ENCODE measurements at regions of chr5 and their contacts with region 1.

Region 1: DNA sequence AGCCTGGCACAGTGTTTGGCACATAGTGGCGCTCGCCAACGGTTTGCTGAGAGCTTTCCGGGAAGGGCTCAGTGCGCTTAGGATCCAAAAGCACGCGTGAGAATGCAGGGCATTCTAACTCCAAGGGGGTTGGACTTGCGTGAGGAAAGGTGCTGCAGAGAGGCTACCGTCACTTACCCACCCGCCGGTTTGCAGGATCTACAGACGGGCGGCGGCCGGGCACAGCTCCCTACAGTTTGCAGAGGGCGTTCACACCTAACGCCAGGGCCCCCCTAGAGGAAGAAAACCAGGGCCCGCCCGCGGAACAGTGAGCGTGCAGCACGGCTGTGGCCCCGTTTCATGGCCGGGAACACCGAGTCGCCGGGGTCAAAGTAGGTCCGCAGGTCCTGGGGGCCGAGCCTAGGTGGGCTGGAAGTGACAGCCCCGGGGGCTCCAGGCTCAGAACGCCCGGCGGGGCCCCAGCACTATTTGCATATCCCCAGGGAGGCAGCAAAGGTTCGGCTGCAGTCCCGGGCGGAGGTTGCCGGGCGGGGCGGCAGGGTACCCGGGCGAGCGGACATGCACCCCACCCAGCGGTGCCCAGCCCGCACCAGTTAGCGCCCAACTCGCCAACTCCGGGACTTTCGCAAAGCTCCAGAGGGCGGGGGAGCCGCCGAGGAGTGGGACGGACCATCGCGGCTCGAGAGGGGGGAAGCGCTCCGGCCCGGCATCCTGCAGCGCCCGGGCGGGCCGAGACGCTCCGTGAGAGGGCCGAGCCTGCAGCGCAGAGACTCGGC is 526 bp upstream of the GALNT10 start:
- DNase-seq: peak; percentile 83
- H3K4me3 Mint-ChIP-seq: peak overlapping the region; percentile 80
- H3K27ac Mint-ChIP-seq: peak overlapping the region; percentile 55
- H3K4me1 Mint-ChIP-seq: peaks cover 39% of the 10 kb centered on the region
- H3K27me3 Mint-ChIP-seq: peaks cover 5% of the 10 kb centered on the region

Region 2: GRCh38 chr5:153907170-153907775 is 282.7 kb before region 1 on chr5:
- CTCF ChIA-PET with region 1: no interaction called
- POLR2A ChIA-PET with region 1: no interaction called
- intact Hi-C with region 1: no loop called
- DNase-seq: no peak
- H3K4me3 Mint-ChIP-seq: no peak overlapping the region
- H3K27ac Mint-ChIP-seq: no peak overlapping the region
- H3K4me1 Mint-ChIP-seq: no peaks in the 10 kb centered on the region
- H3K27me3 Mint-ChIP-seq: no peaks in the 10 kb centered on the region

Region 3: DNA sequence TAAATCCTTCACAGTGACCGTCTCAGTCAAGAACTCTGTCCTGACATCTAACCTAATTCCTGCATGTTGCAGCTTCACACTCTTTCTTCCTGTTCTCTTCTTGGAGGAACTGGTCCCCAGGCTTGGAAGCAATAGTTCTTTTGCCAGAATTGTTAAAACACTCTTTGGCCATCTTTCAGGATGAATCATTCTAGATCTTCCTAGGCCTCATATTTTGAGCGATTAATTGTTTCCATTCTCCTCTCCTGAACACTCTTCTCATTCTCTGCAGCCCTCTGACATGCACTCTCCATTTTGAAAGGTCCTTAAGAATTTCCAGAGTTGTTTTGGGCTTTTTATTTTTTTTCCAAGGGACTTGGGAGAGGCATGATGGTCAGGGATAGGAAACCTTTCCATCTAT is 237.1 kb before region 1 on chr5:
- CTCF ChIA-PET with region 1: no interaction called
- POLR2A ChIA-PET with region 1: no interaction called
- intact Hi-C with region 1: no loop called
- DNase-seq: no peak
- H3K4me3 Mint-ChIP-seq: no peak overlapping the region
- H3K27ac Mint-ChIP-seq: no peak overlapping the region
- H3K4me1 Mint-ChIP-seq: no peaks in the 10 kb centered on the region
- H3K27me3 Mint-ChIP-seq: no peaks in the 10 kb centered on the region

Region 4: DNA sequence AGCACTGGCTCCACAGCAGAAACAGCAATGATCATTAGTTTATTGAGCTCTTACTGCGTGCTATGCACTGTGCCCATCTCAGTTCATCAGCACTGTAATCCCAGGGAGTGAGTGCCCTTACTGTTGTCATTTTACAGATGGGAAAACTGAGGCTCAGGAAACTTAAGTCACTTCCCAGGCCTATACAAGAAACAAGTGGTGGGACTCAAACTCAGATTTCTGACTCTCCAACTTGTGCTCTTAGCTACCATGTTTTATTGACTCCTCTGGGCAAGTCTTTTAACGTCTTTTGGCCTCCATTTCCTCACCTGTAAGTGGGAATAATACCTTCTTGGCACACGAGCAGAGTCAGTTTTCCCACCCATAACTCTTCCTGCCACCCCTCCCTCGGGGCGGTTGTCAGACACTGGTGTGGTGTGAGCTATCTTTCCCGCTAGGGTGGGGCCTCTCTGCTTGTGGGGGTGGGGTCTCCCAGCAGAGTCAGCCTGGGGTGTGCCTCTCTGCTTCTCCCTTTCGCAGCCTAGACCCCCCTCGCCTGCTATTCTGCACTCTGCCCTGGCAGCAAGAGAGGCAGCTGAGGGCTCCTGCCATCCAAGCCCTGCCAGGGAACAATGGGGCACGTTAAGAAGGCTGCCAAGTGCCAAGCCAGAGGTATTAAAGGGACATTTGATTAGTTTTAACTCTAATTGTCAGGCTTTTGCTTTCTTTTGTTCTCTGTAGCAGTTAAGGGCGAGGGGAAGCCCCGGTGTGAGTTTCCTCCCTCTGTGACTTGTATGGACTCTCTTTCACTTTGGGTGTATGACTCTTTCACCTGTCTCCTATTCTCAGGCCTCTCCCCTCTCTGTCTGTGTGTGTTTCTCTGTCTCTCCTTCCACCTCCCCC is 12.6 kb after region 1 on chr5:
- CTCF ChIA-PET with region 1: interaction called, 8 read pairs
- POLR2A ChIA-PET with region 1: interaction called, 27 read pairs
- intact Hi-C with region 1: no loop called
- DNase-seq: peak; percentile 77
- H3K4me3 Mint-ChIP-seq: peak overlapping the region; percentile 39
- H3K27ac Mint-ChIP-seq: peak overlapping the region; percentile 72
- H3K4me1 Mint-ChIP-seq: peaks cover 60% of the 10 kb centered on the region
- H3K27me3 Mint-ChIP-seq: no peaks in the 10 kb centered on the region

Region 5: DNA sequence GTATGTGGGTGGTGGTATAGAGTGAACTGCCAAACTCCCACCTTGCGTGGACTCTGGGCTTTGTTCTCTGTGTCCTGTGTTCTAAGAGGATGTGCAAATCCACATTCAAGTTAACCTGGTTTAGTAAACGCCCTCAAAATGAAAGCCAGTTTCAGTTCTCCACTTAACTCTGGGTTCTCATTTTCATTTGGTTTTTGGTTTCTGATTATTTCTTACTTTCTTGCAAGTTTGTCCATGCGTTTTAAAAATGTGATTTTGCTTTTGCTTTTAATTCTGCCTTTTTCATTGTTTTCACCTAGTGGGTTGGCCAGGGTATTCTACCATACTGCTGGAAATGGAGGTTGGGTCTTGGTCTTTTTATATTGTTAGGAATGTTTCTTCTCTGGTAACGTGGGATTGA is 38.7 kb after region 1 on chr5:
- CTCF ChIA-PET with region 1: no interaction called
- POLR2A ChIA-PET with region 1: interaction called, 3 read pairs
- intact Hi-C with region 1: loop called (anchors 5 kb)
- DNase-seq: no peak
- H3K4me3 Mint-ChIP-seq: peak overlapping the region; percentile 17
- H3K27ac Mint-ChIP-seq: peak overlapping the region; percentile 20
- H3K4me1 Mint-ChIP-seq: peaks cover 24% of the 10 kb centered on the region
- H3K27me3 Mint-ChIP-seq: no peaks in the 10 kb centered on the region

Region 6: GRCh38 chr5:154320224-154321089 is 130.4 kb after region 1 on chr5:
- CTCF ChIA-PET with region 1: no interaction called
- POLR2A ChIA-PET with region 1: no interaction called
- intact Hi-C with region 1: no loop called
- DNase-seq: no peak
- H3K4me3 Mint-ChIP-seq: no peak overlapping the region
- H3K27ac Mint-ChIP-seq: no peak overlapping the region
- H3K4me1 Mint-ChIP-seq: peaks cover 3% of the 10 kb centered on the region
- H3K27me3 Mint-ChIP-seq: no peaks in the 10 kb centered on the region

Region 7: GRCh38 chr5:154356020-154356655 is 166.1 kb after region 1 on chr5:
- CTCF ChIA-PET with region 1: no interaction called
- POLR2A ChIA-PET with region 1: no interaction called
- intact Hi-C with region 1: no loop called
- DNase-seq: no peak
- H3K4me3 Mint-ChIP-seq: no peak overlapping the region
- H3K27ac Mint-ChIP-seq: no peak overlapping the region
- H3K4me1 Mint-ChIP-seq: peaks cover 7% of the 10 kb centered on the region
- H3K27me3 Mint-ChIP-seq: no peaks in the 10 kb centered on the region

Region 8: DNA sequence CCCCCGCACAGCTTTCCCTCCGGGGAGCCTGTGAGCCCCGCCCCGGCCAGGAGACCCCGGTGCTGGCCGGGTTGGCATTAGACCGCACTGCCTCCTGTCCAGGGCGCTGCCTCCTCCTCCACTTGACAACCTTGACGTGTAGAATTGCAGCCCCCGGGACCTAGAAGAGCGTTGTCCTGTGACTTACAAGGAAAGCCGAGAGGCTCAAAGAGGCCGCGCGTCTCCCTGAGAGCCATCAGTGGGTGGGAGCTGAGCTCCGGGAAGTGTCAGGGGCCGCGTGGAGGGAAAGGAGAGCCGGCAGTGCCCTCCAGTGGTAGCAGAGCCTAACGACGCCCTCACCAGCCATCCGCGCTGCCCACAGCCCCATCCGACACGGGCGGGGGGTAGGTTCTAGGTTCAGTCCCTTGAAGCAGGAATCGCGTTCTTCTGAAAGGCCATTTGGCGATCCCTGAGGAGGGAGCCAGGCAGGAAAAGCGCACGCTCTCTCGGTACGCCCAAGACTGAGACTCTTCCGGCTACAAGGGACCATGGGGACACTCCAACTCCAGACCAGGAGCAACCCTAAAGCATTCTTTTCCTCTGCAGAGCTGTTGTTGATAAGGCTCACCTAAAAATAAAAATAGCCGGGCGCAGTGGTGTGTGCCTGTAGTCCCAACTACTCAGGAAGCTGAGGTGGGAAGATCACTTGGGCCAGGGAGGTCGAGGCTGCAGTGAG is 215.2 kb after region 1 on chr5:
- CTCF ChIA-PET with region 1: interaction called, 50 read pairs
- POLR2A ChIA-PET with region 1: interaction called, 3 read pairs
- intact Hi-C with region 1: loop called (anchors 2 kb)
- DNase-seq: peak; percentile 83
- H3K4me3 Mint-ChIP-seq: peak overlapping the region; percentile 20
- H3K27ac Mint-ChIP-seq: no peak overlapping the region
- H3K4me1 Mint-ChIP-seq: peaks cover 10% of the 10 kb centered on the region
- H3K27me3 Mint-ChIP-seq: no peaks in the 10 kb centered on the region

Measured in activated CD4-positive, alpha-beta memory T cell treated with anti-CD3 and anti-CD28 coated beads for 36 hours (primary cell).